ENCODE measurements at regions of chr1 and their contacts with region 1.

Region 1: DNA sequence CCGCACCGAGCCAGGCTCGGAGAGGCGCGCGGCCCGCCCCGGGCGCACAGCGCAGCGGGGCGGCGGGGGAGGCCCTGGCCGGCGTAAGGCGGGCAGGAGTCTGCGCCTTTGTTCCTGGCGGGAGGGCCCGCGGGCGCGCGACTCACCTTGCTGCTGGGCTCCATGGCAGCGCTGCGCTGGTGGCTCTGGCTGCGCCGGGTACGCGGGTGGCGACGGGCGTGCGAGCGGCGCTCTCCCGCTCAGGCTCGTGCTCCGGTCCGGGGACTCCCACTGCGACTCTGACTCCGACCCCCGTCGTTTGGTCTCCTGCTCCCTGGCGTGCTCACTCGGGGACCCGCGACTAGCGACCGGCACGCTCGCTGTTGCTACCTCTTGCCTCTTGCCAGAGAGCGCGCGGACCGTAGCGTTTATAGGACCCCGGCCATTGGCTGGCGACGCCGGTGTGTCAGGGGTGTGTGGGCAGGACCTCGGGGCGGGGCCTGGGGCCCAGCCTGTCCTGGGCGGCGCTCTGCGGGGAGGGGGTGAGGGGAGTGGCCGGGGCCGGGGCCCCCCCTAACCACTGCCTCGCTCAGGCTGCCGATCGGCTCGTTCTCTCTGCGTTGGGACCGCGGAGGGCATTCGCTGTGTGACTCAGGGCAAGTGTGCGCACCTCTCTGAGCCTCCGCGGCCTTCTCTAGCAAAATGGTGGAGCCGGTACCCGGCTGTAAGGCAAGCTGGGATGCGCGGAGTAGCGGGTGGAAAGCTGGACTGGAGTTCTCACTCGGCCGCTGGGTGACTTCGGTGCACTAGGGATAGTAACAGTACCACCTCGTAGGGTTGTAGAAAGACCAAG is at the start of gene SLC2A1:
- DNase-seq: peak; percentile 92 to 97 (median 95)
- H3K4me3 ChIP-seq: peak within 1 kb of the TSS; percentile 66 to 78
- H3K4me3 Mint-ChIP-seq: peak within 1 kb of the TSS; percentile 97 to 99 (median 98)
- H3K27ac ChIP-seq: peak within 1 kb of the TSS; percentile 76
- H3K27ac Mint-ChIP-seq: peak within 1 kb of the TSS; percentile 97 to 99 (median 98)
- H3K4me1 ChIP-seq: peaks cover 59% of the 10 kb centered on the region
- H3K4me1 Mint-ChIP-seq: peaks cover 35 to 79% (median 51%) of the 10 kb centered on the region in 4 donors
- H3K27me3 ChIP-seq: no peaks in the 10 kb centered on the region
- H3K27me3 Mint-ChIP-seq: no peaks in the 10 kb centered on the region
- total RNA-seq, gene SLC2A1: 57.5 to 58.4 TPM

Region 2: DNA sequence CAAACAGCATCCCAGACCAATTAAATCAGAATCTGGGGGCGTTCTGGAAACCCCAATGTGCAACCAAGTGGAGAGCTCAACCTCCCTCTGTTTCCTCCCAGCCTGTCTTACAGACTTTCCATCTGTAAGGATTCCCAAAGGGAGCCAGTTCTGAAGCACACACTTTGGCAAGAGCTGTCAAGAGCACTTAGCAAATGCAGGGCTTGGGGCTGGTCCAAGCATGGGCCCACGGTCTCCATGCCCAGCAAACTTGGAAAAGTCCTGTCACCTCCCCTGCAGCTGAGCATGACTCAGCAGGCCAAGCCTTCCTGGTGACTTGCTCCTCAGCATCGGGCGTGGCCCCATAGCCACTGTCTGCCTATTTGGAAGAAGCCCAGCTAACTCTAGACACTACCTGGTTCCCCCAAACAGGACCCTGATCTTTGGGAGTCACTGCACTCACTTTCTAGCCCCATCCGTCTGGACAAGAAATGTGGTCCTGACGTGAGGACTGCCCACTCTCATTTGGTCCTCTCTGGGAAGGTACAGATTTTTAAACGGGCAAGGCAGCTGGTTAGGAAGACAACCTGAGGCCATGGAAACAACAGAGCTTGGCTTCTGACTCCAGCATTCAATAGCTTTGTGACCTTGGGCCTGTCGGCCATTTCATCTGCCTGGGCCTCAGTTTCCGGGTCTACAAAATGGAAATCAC is 16.9 kb before region 1 on chr1:
- CTCF ChIA-PET with region 1: interaction called, 6 read pairs
- POLR2A ChIA-PET with region 1: interaction called, 555 read pairs
- intact Hi-C with region 1: loop called (anchors 1 kb)
- DNase-seq: no peak
- H3K4me3 ChIP-seq: no peak overlapping the region
- H3K4me3 Mint-ChIP-seq: peak overlapping the region in 5 of 8 donors; percentile 27 to 84 (median 74)
- H3K27ac ChIP-seq: peak overlapping the region; percentile 52
- H3K27ac Mint-ChIP-seq: peak overlapping the region; percentile 59 to 91 (median 89)
- H3K4me1 ChIP-seq: peaks cover 98% of the 10 kb centered on the region
- H3K4me1 Mint-ChIP-seq: peaks cover 80 to 100% (median 93%) of the 10 kb centered on the region in 4 donors
- H3K27me3 ChIP-seq: no peaks in the 10 kb centered on the region
- H3K27me3 Mint-ChIP-seq: no peaks in the 10 kb centered on the region

Region 3: GRCh38 chr1:43008115-43009060 is 49.7 kb after region 1 on chr1:
- CTCF ChIA-PET with region 1: no interaction called
- POLR2A ChIA-PET with region 1: no interaction called
- intact Hi-C with region 1: no loop called
- DNase-seq: no peak
- H3K4me3 ChIP-seq: no peak overlapping the region
- H3K4me3 Mint-ChIP-seq: no peak overlapping the region
- H3K27ac ChIP-seq: no peak overlapping the region
- H3K27ac Mint-ChIP-seq: no peak overlapping the region
- H3K4me1 ChIP-seq: peaks cover 4% of the 10 kb centered on the region
- H3K4me1 Mint-ChIP-seq: peaks cover 0 to 2% (median 0%) of the 10 kb centered on the region in 4 donors
- H3K27me3 ChIP-seq: no peaks in the 10 kb centered on the region
- H3K27me3 Mint-ChIP-seq: peaks cover 9 to 12% of the 10 kb centered on the region in 2 donors

Region 4: DNA sequence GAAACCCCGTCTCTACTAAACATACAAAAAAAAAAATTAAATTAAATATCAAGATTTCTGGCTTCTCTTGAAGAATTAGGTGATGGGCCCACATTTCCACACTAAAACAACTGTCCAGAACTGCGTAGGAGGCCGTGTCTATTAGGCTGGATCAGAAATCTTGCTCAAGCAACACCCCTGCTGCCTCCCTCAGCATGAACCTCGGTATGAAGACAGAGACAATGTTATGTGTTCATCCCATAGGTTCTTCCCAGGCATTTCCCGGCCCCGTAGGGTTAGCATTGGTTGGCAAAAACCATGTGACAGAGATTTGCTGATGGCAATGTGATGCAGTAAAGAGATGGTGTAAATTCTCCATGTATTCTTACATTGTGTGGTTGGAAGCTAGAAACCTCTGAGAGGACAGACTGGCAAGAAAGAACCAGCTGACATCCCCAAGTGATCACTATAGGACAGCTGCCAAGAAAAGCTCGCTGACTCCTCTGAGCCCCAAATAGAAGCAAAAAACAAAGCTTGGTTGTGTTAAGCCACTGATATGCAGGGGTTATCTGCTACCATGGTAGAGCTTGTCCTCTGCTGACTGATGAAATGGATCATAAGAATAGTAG is 178.8 kb after region 1 on chr1:
- CTCF ChIA-PET with region 1: no interaction called
- POLR2A ChIA-PET with region 1: no interaction called
- intact Hi-C with region 1: no loop called
- DNase-seq: no peak
- H3K4me3 ChIP-seq: no peak overlapping the region
- H3K4me3 Mint-ChIP-seq: no peak overlapping the region
- H3K27ac ChIP-seq: no peak overlapping the region
- H3K27ac Mint-ChIP-seq: no peak overlapping the region
- H3K4me1 ChIP-seq: no peaks in the 10 kb centered on the region
- H3K4me1 Mint-ChIP-seq: no peaks in the 10 kb centered on the region
- H3K27me3 ChIP-seq: no peaks in the 10 kb centered on the region
- H3K27me3 Mint-ChIP-seq: peaks cover 20 to 37% of the 10 kb centered on the region in 2 donors